ENCODE measurements at regions of chr10 and their contacts with region 1.

Region 1: DNA sequence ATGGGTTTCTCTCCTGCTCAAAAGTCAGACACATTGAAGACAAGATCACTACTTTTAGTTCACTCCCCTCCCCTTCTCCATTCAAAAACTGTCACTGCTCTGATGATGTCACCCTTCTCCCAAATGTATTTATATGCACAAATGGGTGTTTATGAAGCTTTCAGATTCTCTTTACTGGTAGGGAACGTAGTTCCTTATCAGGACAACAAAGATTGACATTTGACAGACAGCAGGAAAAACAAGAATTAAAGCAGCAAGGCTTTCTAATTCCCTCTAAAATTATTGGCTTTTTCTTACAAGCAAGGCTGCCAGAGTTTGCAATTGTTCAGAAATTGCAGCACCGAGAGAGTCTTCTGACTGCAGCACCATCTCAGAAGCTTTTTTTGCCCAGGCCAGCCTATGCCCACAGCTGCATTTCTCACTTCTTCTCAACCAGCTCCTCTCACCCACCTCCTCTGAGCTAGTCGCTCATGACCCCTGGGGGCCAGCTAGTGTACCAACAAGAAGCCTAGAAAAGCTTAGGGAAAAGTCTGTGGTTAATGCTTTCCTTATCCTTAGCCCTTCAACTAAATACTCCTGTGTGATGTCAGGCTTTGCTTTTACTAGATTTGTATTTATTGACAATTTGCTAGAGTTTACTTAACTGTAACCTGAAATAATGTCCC is 265.1 kb downstream of the HTR7 start:
- DNase-seq: no peak
- ATAC-seq: peak; percentile 54
- H3K4me3 Mint-ChIP-seq: no peak overlapping the region
- H3K27ac Mint-ChIP-seq: no peak overlapping the region
- H3K4me1 Mint-ChIP-seq: no peaks in the 10 kb centered on the region
- H3K27me3 Mint-ChIP-seq: peaks cover 2% of the 10 kb centered on the region
- CTCF ChIP-seq: no peak

Region 2: GRCh38 chr10:90148116-90148855 is 444.5 kb before region 1 on chr10:
- CTCF ChIA-PET with region 1: no interaction called
- POLR2A ChIA-PET with region 1: no interaction called
- intact Hi-C with region 1: loop called (anchors 5 kb)
- DNase-seq: no peak
- ATAC-seq: no peak
- H3K4me3 Mint-ChIP-seq: no peak overlapping the region
- H3K27ac Mint-ChIP-seq: no peak overlapping the region
- H3K4me1 Mint-ChIP-seq: no peaks in the 10 kb centered on the region
- H3K27me3 Mint-ChIP-seq: no peaks in the 10 kb centered on the region
- CTCF ChIP-seq: no peak

Region 3: GRCh38 chr10:92278996-92279696 is 1686.4 kb after region 1 on chr10:
- CTCF ChIA-PET with region 1: no interaction called
- POLR2A ChIA-PET with region 1: no interaction called
- intact Hi-C with region 1: no loop called
- DNase-seq: no peak
- ATAC-seq: no peak
- H3K4me3 Mint-ChIP-seq: no peak overlapping the region
- H3K27ac Mint-ChIP-seq: no peak overlapping the region
- H3K4me1 Mint-ChIP-seq: peaks cover 5% of the 10 kb centered on the region
- H3K27me3 Mint-ChIP-seq: no peaks in the 10 kb centered on the region
- CTCF ChIP-seq: no peak